Activated CD8-positive, alpha-beta T cell treated with anti-CD3 and anti-CD28 coated beads for 36 hours (primary cell): ENCODE measurements at regions of chr16 and their contacts with region 1.

Region 1: GRCh38 chr16:66406534-66407221 is 20.4 kb upstream of the BEAN1 start:
- DNase-seq: peak; percentile 94
- ATAC-seq: peak; percentile 82
- H3K4me3 Mint-ChIP-seq: peak overlapping the region; percentile 81
- H3K27ac Mint-ChIP-seq: peak overlapping the region; percentile 67
- H3K4me1 Mint-ChIP-seq: peaks cover 23% of the 10 kb centered on the region
- H3K27me3 Mint-ChIP-seq: peaks cover 8% of the 10 kb centered on the region
- CTCF ChIP-seq: peak; percentile 85

Region 2: DNA sequence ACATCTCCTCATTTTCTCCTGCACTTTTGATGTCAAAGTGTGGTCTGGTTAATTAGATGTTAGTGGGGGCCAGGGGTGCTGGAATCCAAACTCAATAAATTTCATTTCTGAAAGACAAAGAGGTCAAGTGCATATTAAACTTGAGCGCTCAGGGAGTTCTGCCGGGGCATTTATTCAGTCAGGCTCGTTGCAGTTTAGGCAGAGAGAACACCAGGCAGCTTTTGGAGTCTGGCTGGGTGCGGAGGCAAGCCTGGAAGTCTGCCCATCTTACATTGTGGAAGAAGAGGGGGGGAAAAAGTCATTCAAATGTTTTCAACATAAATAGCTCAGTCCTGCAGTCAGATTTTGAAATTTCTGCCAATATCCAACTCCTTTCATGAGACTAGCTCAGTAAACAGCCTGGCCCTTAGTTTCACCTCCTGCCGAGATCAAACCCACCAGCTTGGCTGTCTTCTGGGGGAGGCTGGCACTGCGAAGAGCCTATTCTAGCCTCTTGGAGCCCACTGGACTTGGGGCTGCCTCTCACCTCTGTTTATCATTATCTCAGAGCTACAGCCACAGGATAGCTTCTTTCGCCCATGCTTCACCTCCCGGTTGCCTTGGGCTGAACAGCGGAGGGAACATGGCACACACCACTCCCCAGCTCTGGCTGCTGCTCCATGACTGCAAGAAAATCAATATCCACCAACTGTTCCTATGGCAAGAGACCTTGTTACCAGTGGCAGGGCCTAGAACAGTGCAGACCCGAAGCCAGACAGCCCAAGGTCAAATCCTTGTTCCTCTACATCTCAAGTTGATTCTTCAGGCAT is 217.6 kb before region 1 on chr16:
- CTCF ChIA-PET with region 1: no interaction called
- POLR2A ChIA-PET with region 1: no interaction called
- intact Hi-C with region 1: no loop called
- DNase-seq: no peak
- ATAC-seq: no peak
- H3K4me3 Mint-ChIP-seq: no peak overlapping the region
- H3K27ac Mint-ChIP-seq: no peak overlapping the region
- H3K4me1 Mint-ChIP-seq: no peaks in the 10 kb centered on the region
- H3K27me3 Mint-ChIP-seq: peaks cover 8% of the 10 kb centered on the region
- CTCF ChIP-seq: no peak

Region 3: GRCh38 chr16:66386629-66387622 is 19.8 kb before region 1 on chr16:
- CTCF ChIA-PET with region 1: interaction called, 14 read pairs
- POLR2A ChIA-PET with region 1: interaction called, 3 read pairs
- intact Hi-C with region 1: no loop called
- DNase-seq: no peak
- ATAC-seq: no peak
- H3K4me3 Mint-ChIP-seq: no peak overlapping the region
- H3K27ac Mint-ChIP-seq: no peak overlapping the region
- H3K4me1 Mint-ChIP-seq: no peaks in the 10 kb centered on the region
- H3K27me3 Mint-ChIP-seq: peaks cover 2% of the 10 kb centered on the region
- CTCF ChIP-seq: no peak

Region 4: DNA sequence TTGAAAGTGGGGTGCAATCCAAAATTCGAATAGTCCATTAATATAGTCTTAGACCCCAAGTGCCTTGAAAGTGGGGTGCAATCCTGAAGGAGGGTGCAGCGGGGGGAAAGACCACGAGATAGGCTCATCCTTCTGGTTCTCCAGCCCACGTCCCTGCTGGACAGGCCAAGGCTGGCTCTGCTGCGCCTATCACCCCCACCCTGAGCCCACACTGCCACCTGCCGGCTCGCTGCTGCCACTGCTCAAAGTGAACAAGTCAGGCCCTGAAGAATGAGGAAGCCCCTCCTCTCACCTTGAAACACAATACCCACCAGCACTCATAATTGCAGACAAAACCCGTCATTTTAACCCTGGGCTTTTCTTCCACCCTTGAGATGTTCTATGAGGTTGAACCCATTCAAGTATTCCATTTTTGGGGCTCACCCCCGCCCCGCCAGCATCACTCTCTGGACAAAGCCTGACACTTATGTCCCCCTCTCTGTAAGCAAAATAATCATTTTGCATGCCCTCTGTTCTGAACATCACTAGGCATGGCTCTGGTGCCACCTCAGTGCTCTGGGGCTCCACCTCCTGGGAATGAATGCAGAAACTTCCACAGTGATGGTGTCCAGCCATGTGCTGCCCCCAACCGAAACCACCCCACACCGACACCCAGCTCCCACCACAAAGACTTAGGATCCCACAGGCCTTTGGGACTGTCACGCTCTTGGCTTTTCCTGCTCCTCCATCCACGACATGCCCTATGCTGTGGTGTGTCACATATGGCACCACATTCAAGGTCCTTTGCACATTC is 77.2 kb after region 1 on chr16:
- CTCF ChIA-PET with region 1: interaction called, 158 read pairs
- POLR2A ChIA-PET with region 1: no interaction called
- intact Hi-C with region 1: loop called (anchors 1 kb)
- DNase-seq: peak; percentile 81
- ATAC-seq: peak; percentile 85
- H3K4me3 Mint-ChIP-seq: no peak overlapping the region
- H3K27ac Mint-ChIP-seq: no peak overlapping the region
- H3K4me1 Mint-ChIP-seq: peaks cover 24% of the 10 kb centered on the region
- H3K27me3 Mint-ChIP-seq: no peaks in the 10 kb centered on the region
- CTCF ChIP-seq: peak; percentile 90

Region 5: DNA sequence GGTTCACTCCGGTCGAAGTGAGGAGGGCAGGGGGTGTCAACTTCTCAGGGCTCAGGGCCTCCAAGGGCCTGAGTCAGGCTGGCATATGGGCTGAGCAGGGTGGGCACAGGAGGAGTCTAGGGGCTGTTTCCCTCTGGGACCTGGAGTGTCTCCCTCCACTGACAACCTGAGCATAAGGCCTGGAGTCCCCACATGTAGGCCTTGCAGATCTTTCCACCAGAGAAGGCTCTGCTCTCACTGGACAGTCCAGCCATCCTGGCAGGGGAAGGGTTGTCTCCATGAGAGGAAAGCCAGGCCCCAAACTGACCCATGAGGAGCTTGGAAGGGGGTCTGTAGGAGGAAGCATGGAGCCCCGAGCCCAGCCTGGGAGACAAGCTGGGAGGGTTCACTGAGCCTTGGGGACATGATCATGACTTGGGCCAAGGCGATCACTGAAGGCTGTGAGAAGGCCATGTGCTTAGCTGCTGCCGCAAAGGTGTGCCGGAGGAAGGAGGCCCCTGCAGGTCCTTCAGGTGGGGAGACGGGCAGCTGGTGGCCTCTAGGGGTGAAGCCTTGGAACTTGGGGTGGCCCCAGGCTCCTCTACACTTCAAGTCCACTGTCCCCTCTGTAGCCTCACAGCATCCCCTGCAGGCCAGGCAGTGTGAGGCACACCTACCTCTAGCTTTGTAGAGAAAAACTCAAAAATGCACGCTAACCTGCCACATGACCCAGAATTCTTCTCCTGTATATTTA is 182.5 kb after region 1 on chr16:
- CTCF ChIA-PET with region 1: interaction called, 19 read pairs
- POLR2A ChIA-PET with region 1: no interaction called
- intact Hi-C with region 1: loop called (anchors 5 kb)
- DNase-seq: peak; percentile 79
- ATAC-seq: peak; percentile 96
- H3K4me3 Mint-ChIP-seq: peak overlapping the region; percentile 69
- H3K27ac Mint-ChIP-seq: no peak overlapping the region
- H3K4me1 Mint-ChIP-seq: peaks cover 36% of the 10 kb centered on the region
- H3K27me3 Mint-ChIP-seq: no peaks in the 10 kb centered on the region
- CTCF ChIP-seq: peak; percentile 81

Region 6: DNA sequence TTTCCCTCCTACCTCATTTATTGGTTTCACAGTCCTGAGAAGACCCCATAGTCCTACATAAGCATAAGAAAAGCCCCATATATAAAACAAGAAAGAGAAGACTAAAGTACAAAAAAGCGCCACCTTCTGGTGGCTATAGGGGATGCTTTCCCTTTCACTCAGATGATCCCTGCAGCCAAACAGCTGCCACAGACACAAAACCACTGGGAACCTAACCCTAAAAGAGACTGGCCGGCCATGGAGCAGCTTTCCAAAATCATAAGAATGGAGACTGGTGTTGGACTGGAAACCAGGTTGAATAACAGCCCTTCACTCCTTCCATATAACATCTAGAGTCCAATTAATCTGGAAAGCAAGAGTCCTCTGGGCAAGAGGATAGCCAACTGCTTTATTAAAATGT is 333.3 kb after region 1 on chr16:
- CTCF ChIA-PET with region 1: interaction called, 21 read pairs
- POLR2A ChIA-PET with region 1: no interaction called
- intact Hi-C with region 1: no loop called
- DNase-seq: peak; percentile 61
- ATAC-seq: peak; percentile 76
- H3K4me3 Mint-ChIP-seq: no peak overlapping the region
- H3K27ac Mint-ChIP-seq: peak overlapping the region; percentile 8
- H3K4me1 Mint-ChIP-seq: peaks cover 16% of the 10 kb centered on the region
- H3K27me3 Mint-ChIP-seq: no peaks in the 10 kb centered on the region
- CTCF ChIP-seq: peak; percentile 66